ENCODE measurements at regions of chr16 and their contacts with region 1.

Region 1: DNA sequence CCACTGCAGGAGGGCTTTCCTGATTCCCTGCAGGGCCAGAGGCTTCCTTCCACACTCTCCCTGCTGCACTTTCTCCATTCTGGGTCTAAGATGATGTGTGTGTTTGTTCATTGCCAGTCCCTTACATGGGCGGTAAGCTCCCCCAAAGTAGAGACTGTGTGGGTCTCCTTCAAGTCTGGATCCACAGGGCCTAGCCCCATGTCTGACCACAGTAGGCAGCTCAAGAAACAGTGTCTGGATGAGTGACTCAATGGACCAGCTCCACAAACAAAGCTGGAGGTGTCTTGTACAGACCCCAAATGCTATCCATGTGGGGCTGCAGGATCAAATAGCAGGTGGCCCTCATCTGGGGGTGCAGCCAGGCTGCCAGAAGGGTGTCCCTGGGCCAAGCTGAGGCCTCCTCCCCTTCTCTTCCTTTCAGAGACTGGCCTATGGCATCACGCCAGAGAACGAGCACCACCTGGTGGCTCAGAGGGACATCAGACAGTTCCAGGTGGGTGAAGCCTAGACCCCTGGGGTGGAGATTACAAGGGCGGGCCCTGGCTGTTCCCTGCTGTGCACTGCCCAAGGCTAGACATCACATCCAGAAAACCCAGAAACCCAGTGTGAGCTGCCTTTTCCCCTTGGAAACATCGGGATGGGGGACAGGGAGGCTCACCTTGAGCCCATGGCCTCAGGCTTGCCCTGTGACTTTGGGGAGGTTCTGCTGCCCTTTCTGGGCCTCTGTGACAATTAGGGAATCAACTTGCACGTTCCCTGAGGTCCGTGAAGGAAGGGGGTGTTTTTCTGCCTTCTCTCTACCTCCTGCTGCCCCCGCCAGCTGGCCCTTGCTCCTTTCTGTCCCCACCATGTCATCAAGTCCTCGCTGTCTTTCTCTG is 45.9 kb downstream of the SLC6A2 start:
- DNase-seq: peak; percentile 71
- H3K4me3 Mint-ChIP-seq: no peak overlapping the region
- H3K27ac Mint-ChIP-seq: no peak overlapping the region
- H3K4me1 Mint-ChIP-seq: no peaks in the 10 kb centered on the region
- H3K27me3 Mint-ChIP-seq: peaks cover 57% of the 10 kb centered on the region
- CTCF ChIP-seq: peak; percentile 61

Region 2: GRCh38 chr16:55465077-55465896 is 236.4 kb before region 1 on chr16:
- CTCF ChIA-PET with region 1: interaction called, 13 read pairs
- intact Hi-C with region 1: loop called (anchors 1 kb)
- DNase-seq: peak; percentile 90
- H3K4me3 Mint-ChIP-seq: no peak overlapping the region
- H3K27ac Mint-ChIP-seq: no peak overlapping the region
- H3K4me1 Mint-ChIP-seq: no peaks in the 10 kb centered on the region
- H3K27me3 Mint-ChIP-seq: peaks cover 41% of the 10 kb centered on the region
- CTCF ChIP-seq: peak; percentile 100

Region 3: DNA sequence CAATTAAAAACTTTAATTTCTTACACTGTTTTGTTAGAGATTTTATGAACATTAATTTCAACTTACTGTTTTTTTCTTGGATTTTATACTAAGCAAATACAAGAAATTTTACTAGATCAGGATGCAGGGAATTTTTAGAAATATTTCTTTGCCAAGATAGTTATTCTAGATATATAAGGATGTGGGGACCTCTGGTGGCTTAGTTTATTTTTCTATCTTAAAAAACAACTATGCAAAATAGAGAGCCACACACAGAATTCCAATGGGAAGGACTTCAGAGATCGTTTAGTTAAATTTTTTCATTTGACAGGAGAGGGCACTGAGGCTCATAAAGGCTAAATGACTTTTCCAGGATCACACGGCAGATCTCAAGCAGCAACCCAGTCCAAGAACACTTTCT is 158.2 kb before region 1 on chr16:
- CTCF ChIA-PET with region 1: interaction called, 4 read pairs
- intact Hi-C with region 1: loop called (anchors 2 kb)
- DNase-seq: no peak
- H3K4me3 Mint-ChIP-seq: no peak overlapping the region
- H3K27ac Mint-ChIP-seq: no peak overlapping the region
- H3K4me1 Mint-ChIP-seq: no peaks in the 10 kb centered on the region
- H3K27me3 Mint-ChIP-seq: no peaks in the 10 kb centered on the region
- CTCF ChIP-seq: peak; percentile 18

Region 4: DNA sequence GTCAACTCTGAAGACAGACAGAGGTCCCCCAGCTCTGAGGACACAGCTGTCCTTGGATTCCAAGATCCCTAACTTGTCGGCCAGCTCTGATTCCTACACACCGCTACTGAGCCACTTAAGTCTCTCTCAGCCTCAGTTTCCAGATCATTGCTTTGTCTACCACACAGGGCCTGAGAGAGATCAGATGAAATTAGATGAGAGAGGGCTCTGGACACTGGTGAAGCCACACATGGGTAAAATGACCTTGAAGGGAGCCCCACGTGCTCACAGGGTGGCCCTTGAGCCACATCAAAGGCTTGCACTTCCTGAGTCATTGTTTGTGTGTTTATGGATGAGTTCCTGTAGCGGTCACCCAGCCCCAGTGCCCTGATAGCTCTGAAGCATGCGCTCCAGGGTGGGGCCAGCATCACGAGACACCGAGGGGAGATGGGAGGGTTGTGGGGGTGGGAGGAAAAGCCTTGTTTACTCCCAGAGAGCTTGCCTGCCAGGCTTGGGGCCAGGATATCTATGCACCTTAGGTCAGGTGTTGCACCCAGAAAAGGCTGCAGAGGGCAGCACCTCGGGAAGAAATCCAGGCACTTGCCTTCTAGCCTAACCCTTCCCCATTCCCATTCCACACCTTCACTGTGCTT is 78.6 kb before region 1 on chr16:
- CTCF ChIA-PET with region 1: no interaction called
- intact Hi-C with region 1: loop called (anchors 2 kb)
- DNase-seq: peak; percentile 34
- H3K4me3 Mint-ChIP-seq: no peak overlapping the region
- H3K27ac Mint-ChIP-seq: no peak overlapping the region
- H3K4me1 Mint-ChIP-seq: no peaks in the 10 kb centered on the region
- H3K27me3 Mint-ChIP-seq: peaks cover 28% of the 10 kb centered on the region
- CTCF ChIP-seq: peak; percentile 13

Region 5: DNA sequence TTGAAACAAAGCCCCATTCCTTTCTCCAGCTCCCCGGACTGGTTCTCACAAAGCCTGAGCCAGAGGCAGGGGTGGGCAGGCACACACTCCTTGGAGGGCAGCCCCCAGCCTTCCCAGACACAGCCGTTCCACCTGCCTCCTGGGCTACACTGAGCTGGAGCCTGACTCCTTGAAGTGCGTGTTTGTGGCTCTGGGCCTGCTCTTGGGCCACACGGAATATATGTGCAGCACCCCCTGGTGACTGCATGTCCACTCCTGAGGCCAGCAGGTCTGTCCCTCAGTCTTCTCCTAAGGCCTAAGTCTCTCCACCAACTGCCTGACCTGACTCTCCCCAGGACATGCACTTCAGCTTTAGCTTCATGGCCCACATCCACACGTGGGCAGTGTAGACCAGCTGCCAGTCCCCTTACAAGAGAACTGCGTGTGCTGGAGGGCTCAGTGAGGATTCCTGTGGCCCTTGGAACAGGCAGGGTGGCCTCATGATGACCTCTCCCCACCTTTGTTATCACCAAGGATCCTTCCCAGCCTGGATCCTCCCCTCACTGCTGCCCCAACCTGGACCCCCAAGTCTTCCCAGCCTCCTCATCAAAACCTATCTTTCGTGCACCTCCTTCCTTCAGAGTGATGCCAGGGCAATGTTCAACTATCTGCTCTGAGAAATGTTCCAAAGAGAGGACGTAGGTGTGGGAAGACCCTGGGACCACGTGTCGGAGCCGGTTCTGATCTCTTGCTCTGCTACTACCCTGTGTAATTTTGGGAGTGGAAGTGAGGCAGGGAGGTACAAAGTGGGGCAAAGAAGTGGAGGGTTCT is 58.3 kb before region 1 on chr16:
- CTCF ChIA-PET with region 1: no interaction called
- intact Hi-C with region 1: loop called (anchors 5 kb)
- DNase-seq: no peak
- H3K4me3 Mint-ChIP-seq: no peak overlapping the region
- H3K27ac Mint-ChIP-seq: no peak overlapping the region
- H3K4me1 Mint-ChIP-seq: no peaks in the 10 kb centered on the region
- H3K27me3 Mint-ChIP-seq: peaks cover 65% of the 10 kb centered on the region
- CTCF ChIP-seq: no peak